Activated CD8-positive, alpha-beta T cell treated with anti-CD3 and anti-CD28 coated beads, Interleukin-2, amount 10 ng/mL, durations not matched to agents 7 days and 5 days (primary cell): ENCODE measurements at regions of chr13 and their contacts with region 1.

Region 1: GRCh38 chr13:114226699-114227323 is 7.9 kb upstream of the CDC16 start:
- DNase-seq: peak; percentile 89
- ATAC-seq: peak; percentile 93
- H3K4me3 Mint-ChIP-seq: no peak overlapping the region
- H3K27ac Mint-ChIP-seq: peak overlapping the region; percentile 57
- H3K4me1 Mint-ChIP-seq: peaks cover 28% of the 10 kb centered on the region
- H3K27me3 Mint-ChIP-seq: peaks cover 20% of the 10 kb centered on the region

Region 2: DNA sequence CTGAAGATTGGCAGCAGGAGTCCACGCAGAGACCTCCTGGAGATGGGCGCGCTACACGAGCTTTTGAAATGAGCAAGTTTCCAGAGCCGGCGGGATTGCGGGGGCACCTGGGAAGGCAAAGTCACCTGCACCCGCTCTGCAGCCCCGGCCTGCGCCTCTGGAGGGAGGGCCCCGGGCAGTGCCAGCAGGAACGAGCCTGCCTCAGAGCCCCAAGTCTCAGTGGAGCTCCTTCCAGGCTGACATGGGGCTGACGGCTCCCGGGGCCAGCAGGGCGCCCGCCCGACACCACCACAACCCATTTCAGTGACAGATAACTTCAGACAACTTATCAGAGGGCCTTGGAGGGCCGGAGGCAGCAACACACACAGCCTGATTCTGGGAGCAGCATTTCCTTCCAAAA is 139.4 kb before region 1 on chr13:
- CTCF ChIA-PET with region 1: no interaction called
- POLR2A ChIA-PET with region 1: no interaction called
- DNase-seq: no peak
- ATAC-seq: no peak
- H3K4me3 Mint-ChIP-seq: no peak overlapping the region
- H3K27ac Mint-ChIP-seq: no peak overlapping the region
- H3K4me1 Mint-ChIP-seq: no peaks in the 10 kb centered on the region
- H3K27me3 Mint-ChIP-seq: no peaks in the 10 kb centered on the region

Region 3: GRCh38 chr13:114110091-114110829 is 116.6 kb before region 1 on chr13:
- CTCF ChIA-PET with region 1: interaction called, 13 read pairs
- POLR2A ChIA-PET with region 1: no interaction called
- DNase-seq: peak; percentile 88
- ATAC-seq: peak; percentile 94
- H3K4me3 Mint-ChIP-seq: peak overlapping the region; percentile 76
- H3K27ac Mint-ChIP-seq: peak overlapping the region; percentile 98
- H3K4me1 Mint-ChIP-seq: peaks cover 53% of the 10 kb centered on the region
- H3K27me3 Mint-ChIP-seq: no peaks in the 10 kb centered on the region

Region 4: GRCh38 chr13:114212158-114212495 is 14.7 kb before region 1 on chr13:
- CTCF ChIA-PET with region 1: no interaction called
- POLR2A ChIA-PET with region 1: no interaction called
- DNase-seq: no peak
- ATAC-seq: no peak
- H3K4me3 Mint-ChIP-seq: no peak overlapping the region
- H3K27ac Mint-ChIP-seq: no peak overlapping the region
- H3K4me1 Mint-ChIP-seq: no peaks in the 10 kb centered on the region
- H3K27me3 Mint-ChIP-seq: peaks cover 16% of the 10 kb centered on the region